CD14-positive monocyte (primary cell): ENCODE measurements at regions of chr7 and their contacts with region 1.

Region 1: GRCh38 chr7:73683056-73683964 is at the starts of genes BUD23 and DNAJC30:
- DNase-seq: peak; percentile 91 to 96 (median 93)
- H3K4me3 ChIP-seq: peak within 1 kb of the TSS; percentile 74 to 97 (median 96)
- H3K4me3 Mint-ChIP-seq: peak within 1 kb of the TSS; percentile 97 to 98
- H3K27ac ChIP-seq: peak within 1 kb of the TSS; percentile 23 to 93
- H3K27ac Mint-ChIP-seq: peak within 1 kb of the TSS; percentile 89 to 98 (median 93)
- H3K4me1 ChIP-seq: peaks cover 19 to 30% of the 10 kb centered on the region in 2 donors
- H3K4me1 Mint-ChIP-seq: peaks cover 22% of the 10 kb centered on the region
- H3K27me3 ChIP-seq: no peaks in the 10 kb centered on the region
- H3K27me3 Mint-ChIP-seq: peaks cover 0 to 1% (median 0%) of the 10 kb centered on the region in 3 donors
- CTCF ChIP-seq: no peak
- polyA plus RNA-seq, gene BUD23: 44.5 to 51.9 (median 51.1) TPM
- polyA plus RNA-seq, gene DNAJC30: 2.4 to 5.2 (median 3.2) TPM

Region 2: DNA sequence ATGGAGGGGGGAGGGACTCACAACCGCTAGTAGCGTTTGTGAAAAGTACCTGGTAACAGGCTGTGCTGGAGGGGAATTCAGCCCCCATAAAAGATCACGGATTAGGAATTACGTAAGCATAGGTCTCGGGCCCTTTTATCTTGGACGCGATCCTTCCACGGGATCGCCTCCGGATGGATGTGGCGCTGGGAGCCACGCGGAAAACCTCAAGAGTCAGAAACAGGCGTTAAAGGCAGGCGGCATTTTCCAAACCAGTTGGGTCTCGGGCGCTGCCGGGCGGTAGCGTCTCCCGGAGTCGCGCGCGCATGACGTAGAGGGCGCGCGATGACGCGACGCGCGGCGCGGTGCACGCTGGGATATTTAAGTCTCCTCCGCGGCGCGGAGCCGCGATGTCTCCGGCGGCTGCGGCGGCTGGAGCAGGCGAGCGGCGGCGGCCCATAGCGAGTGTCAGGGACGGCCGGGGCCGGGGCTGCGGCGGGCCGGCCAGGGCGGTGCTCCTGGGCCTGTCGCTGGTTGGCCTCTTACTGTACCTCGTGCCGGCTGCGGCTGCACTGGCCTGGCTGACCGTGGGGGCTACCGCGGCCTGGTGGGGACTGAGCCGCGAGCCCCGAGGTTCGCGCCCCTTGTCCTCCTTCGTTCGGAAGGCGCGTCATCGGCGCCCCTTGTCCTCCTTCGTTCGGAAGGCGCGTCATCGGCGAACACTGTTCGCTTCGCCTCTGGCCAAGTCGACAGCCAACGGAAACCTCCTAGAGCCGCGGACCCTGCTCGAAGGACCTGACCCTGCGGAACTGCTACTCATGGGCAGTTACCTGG is 758.4 kb before region 1 on chr7 and contains the start of gene POM121:
- intact Hi-C with region 1: loop called in 1 of 2 experiments (anchors 10 kb)
- DNase-seq: peak; percentile 77 to 91 (median 88)
- H3K4me3 ChIP-seq: peak within 1 kb of the TSS; percentile 77 to 95 (median 86)
- H3K4me3 Mint-ChIP-seq: peak within 1 kb of the TSS; percentile 97 to 99
- H3K27ac ChIP-seq: peak within 1 kb of the TSS; percentile 92 to 95
- H3K27ac Mint-ChIP-seq: peak within 1 kb of the TSS; percentile 99
- H3K4me1 ChIP-seq: peaks cover 14 to 17% of the 10 kb centered on the region in 2 donors
- H3K4me1 Mint-ChIP-seq: peaks cover 13% of the 10 kb centered on the region
- H3K27me3 ChIP-seq: no peaks in the 10 kb centered on the region
- H3K27me3 Mint-ChIP-seq: peaks cover 0 to 2% (median 2%) of the 10 kb centered on the region in 3 donors
- CTCF ChIP-seq: no peak
- polyA plus RNA-seq, gene POM121: 3.4 to 18.8 (median 5.1) TPM

Region 3: GRCh38 chr7:73638911-73639310 is 44.4 kb before region 1 on chr7:
- intact Hi-C with region 1: loop called in 1 of 2 experiments (anchors 2 kb)
- DNase-seq: peak in 2 of 3 donors; percentile 14 to 30
- H3K4me3 ChIP-seq: no peak overlapping the region
- H3K4me3 Mint-ChIP-seq: no peak overlapping the region
- H3K27ac ChIP-seq: no peak overlapping the region
- H3K27ac Mint-ChIP-seq: peak overlapping the region in 2 of 7 donors; percentile 26 to 32
- H3K4me1 ChIP-seq: peaks cover 11 to 20% of the 10 kb centered on the region in 2 donors
- H3K4me1 Mint-ChIP-seq: peaks cover 19% of the 10 kb centered on the region
- H3K27me3 ChIP-seq: peaks cover 0 to 9% of the 10 kb centered on the region in 2 donors
- H3K27me3 Mint-ChIP-seq: peaks cover 10 to 44% (median 31%) of the 10 kb centered on the region in 3 donors
- CTCF ChIP-seq: no peak

Region 4: DNA sequence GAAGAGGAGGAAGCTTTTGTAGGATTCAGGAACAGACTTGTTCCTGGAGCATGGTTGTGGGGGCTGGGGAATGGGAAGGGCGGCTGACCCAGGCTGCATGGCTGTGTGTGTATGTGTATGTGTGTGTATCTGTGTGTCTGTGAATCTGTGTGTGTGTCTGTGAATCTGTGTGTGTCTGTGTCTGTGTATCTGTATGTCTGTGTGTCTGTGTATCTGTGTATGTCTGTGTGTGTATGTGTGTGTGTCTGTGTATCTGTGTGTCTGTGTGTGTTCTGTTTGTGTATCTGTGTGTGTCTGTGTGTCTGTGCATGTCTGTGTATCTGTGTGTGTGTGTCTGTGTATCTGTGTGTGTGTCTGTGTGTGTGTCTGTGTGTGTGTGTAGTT is 42.8 kb after region 1 on chr7:
- intact Hi-C with region 1: loop called in 1 of 2 experiments (anchors 5 kb)
- DNase-seq: no peak
- H3K4me3 ChIP-seq: no peak overlapping the region
- H3K4me3 Mint-ChIP-seq: no peak overlapping the region
- H3K27ac ChIP-seq: no peak overlapping the region
- H3K27ac Mint-ChIP-seq: no peak overlapping the region
- H3K4me1 ChIP-seq: no peaks in the 10 kb centered on the region
- H3K4me1 Mint-ChIP-seq: peaks cover 7% of the 10 kb centered on the region
- H3K27me3 ChIP-seq: peaks cover 13 to 65% of the 10 kb centered on the region in 2 donors
- H3K27me3 Mint-ChIP-seq: peaks cover 53 to 66% (median 58%) of the 10 kb centered on the region in 3 donors
- CTCF ChIP-seq: peak; percentile 3

Region 5: DNA sequence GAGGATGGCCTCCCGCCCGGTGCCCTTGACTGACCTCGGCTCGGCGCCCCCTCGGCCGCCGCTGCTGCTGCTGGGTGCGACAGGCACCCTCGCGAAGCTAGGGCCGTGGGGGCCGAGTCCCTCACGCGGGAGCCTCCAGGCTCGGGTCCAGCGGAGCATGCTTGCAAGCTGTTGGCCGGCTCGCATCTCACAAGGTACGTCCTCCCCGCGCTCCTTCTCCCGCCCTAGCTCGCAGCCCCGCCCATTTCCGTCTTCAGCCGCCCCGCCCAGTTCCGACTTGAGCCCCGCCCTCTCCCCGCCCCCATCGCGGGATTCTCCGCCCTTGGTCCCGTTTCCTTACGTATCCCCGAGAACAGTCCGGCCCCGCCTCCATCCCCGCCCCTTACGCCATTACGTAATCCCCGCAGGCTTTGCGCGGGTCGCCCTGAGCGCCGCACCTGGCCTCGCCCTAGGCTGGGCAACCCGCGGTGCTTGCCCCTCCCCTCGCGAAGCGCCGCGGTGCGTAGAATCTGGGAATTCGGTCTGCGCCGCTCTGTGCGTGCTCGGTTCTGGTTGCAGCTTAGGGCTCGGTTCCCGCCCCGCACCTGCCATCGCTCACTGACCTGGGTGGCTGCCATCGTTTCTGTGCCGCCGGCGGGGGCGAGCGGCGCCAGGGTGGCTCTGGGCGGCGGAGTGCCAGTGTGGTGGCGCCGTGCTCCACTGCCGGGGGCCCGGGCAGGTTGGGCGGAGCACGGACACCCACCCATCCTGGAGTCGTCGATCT is 55.5 kb after region 1 on chr7 and contains the start of gene ABHD11:
- intact Hi-C with region 1: loop called (anchors 5 kb)
- DNase-seq: peak; percentile 84 to 95 (median 93)
- H3K4me3 ChIP-seq: peak within 1 kb of the TSS; percentile 60 to 87 (median 78)
- H3K4me3 Mint-ChIP-seq: peak within 1 kb of the TSS; percentile 93
- H3K27ac ChIP-seq: peak within 1 kb of the TSS; percentile 62 to 77
- H3K27ac Mint-ChIP-seq: peak within 1 kb of the TSS; percentile 78 to 95 (median 90)
- H3K4me1 ChIP-seq: peaks cover 26 to 36% of the 10 kb centered on the region in 2 donors
- H3K4me1 Mint-ChIP-seq: peaks cover 20% of the 10 kb centered on the region
- H3K27me3 ChIP-seq: peaks cover 0 to 12% of the 10 kb centered on the region in 2 donors
- H3K27me3 Mint-ChIP-seq: peaks cover 12 to 29% (median 29%) of the 10 kb centered on the region in 3 donors
- CTCF ChIP-seq: no peak
- polyA plus RNA-seq, gene ABHD11: 20.3 to 23.5 (median 22.1) TPM